ENCODE measurements at regions of chr2 and their contacts with region 1.

Region 1: GRCh38 chr2:241859436-241860183 is 916 bp upstream of the PDCD1 start:
- DNase-seq: peak; percentile 67 to 81 (median 74)
- ATAC-seq: peak; percentile 53 to 72 (median 64)
- H3K4me3 ChIP-seq: peak overlapping the region in 11 of 12 donors; percentile 11 to 50 (median 38)
- H3K27ac ChIP-seq: peak overlapping the region; percentile 79 to 98 (median 90)
- H3K4me1 ChIP-seq: peaks cover under 1 to 38% (median 25%) of the 10 kb centered on the region in 12 donors
- H3K27me3 ChIP-seq: peaks cover 0 to 27% (median 11%) of the 10 kb centered on the region in 9 donors
- CTCF ChIP-seq: peak in 5 of 12 donors; percentile 10 to 45 (median 29)
- POLR2A ChIP-seq: peak in 1 of 2 donors; percentile 36

Region 2: DNA sequence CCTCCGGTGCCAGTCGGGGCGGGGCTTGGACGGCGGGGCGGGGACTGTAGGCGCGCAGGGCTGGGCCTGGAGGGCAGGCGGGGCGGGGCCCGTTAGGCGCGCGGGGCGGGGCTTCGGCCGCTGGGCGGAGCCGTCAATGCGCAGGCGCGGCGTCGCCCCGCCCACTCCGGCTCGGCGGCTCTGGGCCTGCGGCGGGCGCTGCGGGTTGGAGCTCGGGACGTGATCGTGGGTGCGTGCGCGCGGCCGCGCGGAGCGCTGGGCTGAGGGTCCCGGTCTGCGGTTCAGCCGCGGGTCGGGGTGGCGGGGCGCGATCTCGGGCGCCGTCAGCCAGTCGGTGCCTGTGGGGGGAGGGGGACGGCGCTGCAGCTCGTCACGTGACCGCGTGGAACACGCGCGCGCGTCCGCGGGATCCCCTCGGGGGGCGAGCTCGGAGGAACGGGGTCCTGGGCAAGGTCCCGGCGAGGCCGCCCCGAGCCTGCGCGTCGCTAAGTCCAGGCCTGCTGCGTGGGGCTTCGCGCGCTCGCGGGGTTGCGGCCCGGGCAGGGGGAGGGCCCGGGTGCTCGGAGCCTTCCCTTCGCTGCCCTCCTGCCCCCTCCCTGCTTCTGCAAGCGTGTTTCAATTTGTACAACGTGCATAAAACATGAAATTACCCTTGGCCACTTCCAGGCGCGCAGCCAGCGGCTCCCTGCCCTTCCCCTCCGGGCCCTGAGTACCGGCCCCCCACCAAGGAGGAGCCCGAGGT is 125.0 kb before region 1 on chr2 and contains the start of gene D2HGDH:
- intact Hi-C with region 1: loop called in 1 of 10 experiments (anchors 5 kb)
- DNase-seq: peak; percentile 94 to 98 (median 94)
- ATAC-seq: peak; percentile 81 to 96 (median 94)
- H3K4me3 ChIP-seq: peak within 1 kb of the TSS; percentile 67 to 100 (median 94)
- H3K27ac ChIP-seq: peak within 1 kb of the TSS; percentile 70 to 96 (median 90)
- H3K4me1 ChIP-seq: peaks cover 0 to 20% (median 12%) of the 10 kb centered on the region in 12 donors
- H3K27me3 ChIP-seq: no peaks in the 10 kb centered on the region
- CTCF ChIP-seq: no peak
- POLR2A ChIP-seq: peak in 1 of 2 donors; percentile 92
- total RNA-seq, gene D2HGDH: 9.2 to 24.1 (median 20.9) TPM

Region 3: GRCh38 chr2:241759045-241759807 is 100.4 kb before region 1 on chr2:
- intact Hi-C with region 1: loop called in 1 of 10 experiments (anchors 10 kb)
- DNase-seq: no peak
- ATAC-seq: no peak
- H3K4me3 ChIP-seq: no peak overlapping the region
- H3K27ac ChIP-seq: no peak overlapping the region
- H3K4me1 ChIP-seq: no peaks in the 10 kb centered on the region
- H3K27me3 ChIP-seq: no peaks in the 10 kb centered on the region
- CTCF ChIP-seq: no peak
- POLR2A ChIP-seq: no peak

Region 4: GRCh38 chr2:241813471-241814252 is 45.9 kb before region 1 on chr2:
- intact Hi-C with region 1: loop called in 1 of 10 experiments (anchors 5 kb)
- DNase-seq: peak in 2 of 5 donors; percentile 24 to 38
- ATAC-seq: peak in 3 of 4 donors; percentile 2 to 74 (median 17)
- H3K4me3 ChIP-seq: no peak overlapping the region
- H3K27ac ChIP-seq: peak overlapping the region in 2 of 12 donors; percentile 14 to 63
- H3K4me1 ChIP-seq: peaks cover 0 to 28% (median 14%) of the 10 kb centered on the region in 12 donors
- H3K27me3 ChIP-seq: no peaks in the 10 kb centered on the region
- CTCF ChIP-seq: no peak
- POLR2A ChIP-seq: no peak